WTC11 (cell line): ENCODE measurements at regions of chr12 and their contacts with region 1.

Region 1: GRCh38 chr12:13362260-13362841 is 165.8 kb downstream of the EMP1 start:
- DNase-seq: peak; percentile 80
- ATAC-seq: peak; percentile 99
- H3K4me3 Mint-ChIP-seq: no peak overlapping the region
- H3K27ac Mint-ChIP-seq: no peak overlapping the region
- H3K4me1 Mint-ChIP-seq: peaks cover 7% of the 10 kb centered on the region
- H3K27me3 Mint-ChIP-seq: no peaks in the 10 kb centered on the region
- CTCF ChIP-seq: peak; percentile 72

Region 2: GRCh38 chr12:13345722-13346121 is 16.6 kb before region 1 on chr12:
- CTCF ChIA-PET with region 1: interaction called, 16 read pairs
- POLR2A ChIA-PET with region 1: interaction called, 4 read pairs
- DNase-seq: no peak
- ATAC-seq: no peak
- H3K4me3 Mint-ChIP-seq: no peak overlapping the region
- H3K27ac Mint-ChIP-seq: no peak overlapping the region
- H3K4me1 Mint-ChIP-seq: peaks cover 5% of the 10 kb centered on the region
- H3K27me3 Mint-ChIP-seq: no peaks in the 10 kb centered on the region
- CTCF ChIP-seq: no peak

Region 3: GRCh38 chr12:13376627-13377373 is 14.4 kb after region 1 on chr12:
- CTCF ChIA-PET with region 1: interaction called, 59 read pairs
- POLR2A ChIA-PET with region 1: no interaction called
- DNase-seq: no peak
- ATAC-seq: peak; percentile 44
- H3K4me3 Mint-ChIP-seq: no peak overlapping the region
- H3K27ac Mint-ChIP-seq: no peak overlapping the region
- H3K4me1 Mint-ChIP-seq: peaks cover 8% of the 10 kb centered on the region
- H3K27me3 Mint-ChIP-seq: no peaks in the 10 kb centered on the region; the same call in none of the 2 replicates
- CTCF ChIP-seq: no peak

Region 4: GRCh38 chr12:13433768-13434167 is 71.4 kb after region 1 on chr12:
- CTCF ChIA-PET with region 1: interaction called, 11 read pairs
- POLR2A ChIA-PET with region 1: no interaction called
- DNase-seq: no peak
- ATAC-seq: no peak
- H3K4me3 Mint-ChIP-seq: no peak overlapping the region
- H3K27ac Mint-ChIP-seq: no peak overlapping the region
- H3K4me1 Mint-ChIP-seq: peaks cover 24% of the 10 kb centered on the region
- H3K27me3 Mint-ChIP-seq: no peaks in the 10 kb centered on the region; the same call in 1 of the 2 replicates
- CTCF ChIP-seq: no peak

Region 5: GRCh38 chr12:13523536-13524307 is 161.4 kb after region 1 on chr12:
- CTCF ChIA-PET with region 1: interaction called, 10 read pairs
- POLR2A ChIA-PET with region 1: no interaction called
- DNase-seq: no peak
- ATAC-seq: no peak
- H3K4me3 Mint-ChIP-seq: no peak overlapping the region
- H3K27ac Mint-ChIP-seq: no peak overlapping the region
- H3K4me1 Mint-ChIP-seq: no peaks in the 10 kb centered on the region
- H3K27me3 Mint-ChIP-seq: peaks cover 5% of the 10 kb centered on the region; the same call in 1 of the 2 replicates
- CTCF ChIP-seq: no peak

Region 6: DNA sequence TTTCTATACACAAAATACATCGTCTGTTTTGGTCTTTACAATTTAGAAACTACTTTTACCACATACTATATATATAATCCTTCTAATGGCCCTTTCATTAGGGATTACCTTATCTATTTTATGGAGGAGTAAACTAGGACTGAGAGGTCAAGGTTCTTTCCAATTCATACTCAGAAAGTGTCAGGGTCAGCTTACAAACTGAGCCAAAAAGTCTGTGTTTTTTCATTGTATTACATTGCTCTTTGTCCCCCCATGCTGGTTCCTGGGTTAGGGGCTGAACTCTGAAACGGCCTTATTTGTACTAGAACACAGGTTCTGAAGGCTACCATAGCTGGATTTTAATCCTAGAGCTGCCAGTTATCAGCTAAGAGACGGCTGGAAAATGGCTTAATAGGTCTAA is 250.9 kb after region 1 on chr12:
- CTCF ChIA-PET with region 1: no interaction called
- POLR2A ChIA-PET with region 1: no interaction called
- DNase-seq: no peak
- ATAC-seq: no peak
- H3K4me3 Mint-ChIP-seq: no peak overlapping the region
- H3K27ac Mint-ChIP-seq: no peak overlapping the region
- H3K4me1 Mint-ChIP-seq: no peaks in the 10 kb centered on the region
- H3K27me3 Mint-ChIP-seq: no peaks in the 10 kb centered on the region
- CTCF ChIP-seq: no peak